Activated CD4-positive, alpha-beta T cell treated with anti-CD3 and anti-CD28 coated beads, Interleukin-2, amount 10 ng/mL, durations not matched to agents 7 days and 5 days (primary cell): ENCODE measurements at regions of chr10 and their contacts with region 1.

Region 1: GRCh38 chr10:62217683-62218082 is 51.0 kb downstream of the RTKN2 start:
- DNase-seq: no peak
- H3K4me3 Mint-ChIP-seq: no peak overlapping the region
- H3K27ac Mint-ChIP-seq: no peak overlapping the region
- H3K4me1 Mint-ChIP-seq: peaks cover 2% of the 10 kb centered on the region
- H3K27me3 Mint-ChIP-seq: no peaks in the 10 kb centered on the region

Region 2: GRCh38 chr10:62244780-62245467 is 27.2 kb after region 1 on chr10:
- CTCF ChIA-PET with region 1: interaction called, 10 read pairs
- POLR2A ChIA-PET with region 1: no interaction called
- DNase-seq: peak; percentile 78
- H3K4me3 Mint-ChIP-seq: no peak overlapping the region
- H3K27ac Mint-ChIP-seq: peak overlapping the region; percentile 76
- H3K4me1 Mint-ChIP-seq: peaks cover 37% of the 10 kb centered on the region
- H3K27me3 Mint-ChIP-seq: no peaks in the 10 kb centered on the region